ENCODE measurements at regions of chr9 and their contacts with region 1.

Region 1: DNA sequence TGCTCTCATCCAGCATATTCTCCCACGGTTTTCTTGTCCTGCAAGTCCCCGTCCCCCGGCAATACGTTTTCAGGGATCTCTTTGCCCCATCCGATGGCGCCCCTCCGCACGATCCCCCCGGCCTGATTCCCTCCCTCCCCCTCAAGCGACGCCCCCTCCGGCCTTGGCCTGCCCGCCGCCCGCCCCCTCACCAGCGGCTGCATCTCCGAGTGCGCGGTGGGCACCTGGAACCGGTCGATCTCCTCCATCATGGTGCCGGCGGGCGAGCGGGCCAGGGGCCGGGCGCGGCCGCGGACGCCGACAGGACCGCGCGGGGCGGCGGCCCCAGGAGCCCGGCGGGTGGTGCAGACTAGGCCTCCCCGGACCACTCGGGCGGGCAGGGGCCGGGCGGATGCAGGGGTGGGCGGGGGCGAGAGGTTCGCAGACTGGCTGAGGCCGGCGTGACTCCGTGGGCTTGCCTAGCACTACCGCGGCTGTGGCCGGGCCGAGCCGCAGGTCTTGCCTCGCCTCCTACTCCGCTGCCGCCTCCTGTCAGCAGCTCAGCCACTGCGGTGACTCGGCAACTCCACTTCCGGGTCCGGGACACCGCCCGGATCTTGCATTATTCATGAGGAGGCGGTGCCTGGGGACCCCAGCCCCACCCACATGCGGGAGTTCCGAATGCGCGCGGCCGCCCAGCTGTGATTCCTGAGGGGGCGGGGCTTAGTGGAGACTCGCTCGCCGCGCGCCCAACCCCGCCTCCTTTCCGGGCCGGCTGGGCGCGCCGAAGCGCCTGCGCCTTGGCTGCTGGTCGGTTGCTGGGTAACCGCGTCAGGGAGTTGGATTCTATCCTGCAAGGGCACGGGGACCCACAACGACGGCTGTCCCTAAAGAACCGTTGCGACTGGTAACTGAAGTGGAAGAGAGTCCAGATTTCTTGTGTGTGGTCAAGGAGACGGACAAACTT is at the starts of genes DNAI1 and FAM219A:
- DNase-seq: peak; percentile 99
- H3K4me3 Mint-ChIP-seq: peak within 1 kb of the TSS; percentile 86
- H3K27ac Mint-ChIP-seq: no peak within 1 kb of the TSS
- H3K4me1 Mint-ChIP-seq: peaks cover 40% of the 10 kb centered on the region
- H3K27me3 Mint-ChIP-seq: peaks cover 5% of the 10 kb centered on the region
- total RNA-seq, gene DNAI1: 0.19 to 0.69 TPM
- total RNA-seq, gene FAM219A: 13.3 to 13.8 TPM

Region 2: DNA sequence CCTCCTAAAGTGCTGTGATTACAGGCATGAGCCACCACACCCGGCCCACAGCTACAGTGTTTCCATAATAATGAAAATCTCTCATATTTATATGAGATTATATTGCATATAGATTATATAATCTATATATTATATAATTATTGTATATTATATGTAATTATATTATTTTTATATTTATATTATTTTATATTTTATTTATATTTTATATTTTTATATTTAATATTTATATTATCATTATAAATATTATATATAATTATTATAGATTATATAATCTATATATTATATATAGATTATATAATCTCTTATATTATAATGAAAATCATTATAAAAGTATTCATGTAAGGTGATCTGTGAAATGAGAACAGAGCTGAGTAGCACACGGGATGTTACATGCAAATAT is 922.7 kb before region 1 on chr9:
- CTCF ChIA-PET with region 1: no interaction called
- POLR2A ChIA-PET with region 1: no interaction called
- intact Hi-C with region 1: no loop called
- DNase-seq: no peak
- H3K4me3 Mint-ChIP-seq: no peak overlapping the region
- H3K27ac Mint-ChIP-seq: no peak overlapping the region
- H3K4me1 Mint-ChIP-seq: no peaks in the 10 kb centered on the region
- H3K27me3 Mint-ChIP-seq: peaks cover 4% of the 10 kb centered on the region

Region 3: GRCh38 chr9:34048923-34049697 is 409.2 kb before region 1 on chr9:
- CTCF ChIA-PET with region 1: no interaction called
- POLR2A ChIA-PET with region 1: interaction called, 5 read pairs
- intact Hi-C with region 1: loop called (anchors 5 kb)
- DNase-seq: peak; percentile 97
- H3K4me3 Mint-ChIP-seq: peak overlapping the region; percentile 89
- H3K27ac Mint-ChIP-seq: peak overlapping the region; percentile 99
- H3K4me1 Mint-ChIP-seq: peaks cover 32% of the 10 kb centered on the region
- H3K27me3 Mint-ChIP-seq: no peaks in the 10 kb centered on the region

Region 4: GRCh38 chr9:34446468-34446891 is 11.8 kb before region 1 on chr9:
- CTCF ChIA-PET with region 1: interaction called, 13 read pairs
- POLR2A ChIA-PET with region 1: interaction called, 4 read pairs
- intact Hi-C with region 1: no loop called
- DNase-seq: no peak
- H3K4me3 Mint-ChIP-seq: no peak overlapping the region
- H3K27ac Mint-ChIP-seq: no peak overlapping the region
- H3K4me1 Mint-ChIP-seq: peaks cover 6% of the 10 kb centered on the region
- H3K27me3 Mint-ChIP-seq: no peaks in the 10 kb centered on the region

Region 5: DNA sequence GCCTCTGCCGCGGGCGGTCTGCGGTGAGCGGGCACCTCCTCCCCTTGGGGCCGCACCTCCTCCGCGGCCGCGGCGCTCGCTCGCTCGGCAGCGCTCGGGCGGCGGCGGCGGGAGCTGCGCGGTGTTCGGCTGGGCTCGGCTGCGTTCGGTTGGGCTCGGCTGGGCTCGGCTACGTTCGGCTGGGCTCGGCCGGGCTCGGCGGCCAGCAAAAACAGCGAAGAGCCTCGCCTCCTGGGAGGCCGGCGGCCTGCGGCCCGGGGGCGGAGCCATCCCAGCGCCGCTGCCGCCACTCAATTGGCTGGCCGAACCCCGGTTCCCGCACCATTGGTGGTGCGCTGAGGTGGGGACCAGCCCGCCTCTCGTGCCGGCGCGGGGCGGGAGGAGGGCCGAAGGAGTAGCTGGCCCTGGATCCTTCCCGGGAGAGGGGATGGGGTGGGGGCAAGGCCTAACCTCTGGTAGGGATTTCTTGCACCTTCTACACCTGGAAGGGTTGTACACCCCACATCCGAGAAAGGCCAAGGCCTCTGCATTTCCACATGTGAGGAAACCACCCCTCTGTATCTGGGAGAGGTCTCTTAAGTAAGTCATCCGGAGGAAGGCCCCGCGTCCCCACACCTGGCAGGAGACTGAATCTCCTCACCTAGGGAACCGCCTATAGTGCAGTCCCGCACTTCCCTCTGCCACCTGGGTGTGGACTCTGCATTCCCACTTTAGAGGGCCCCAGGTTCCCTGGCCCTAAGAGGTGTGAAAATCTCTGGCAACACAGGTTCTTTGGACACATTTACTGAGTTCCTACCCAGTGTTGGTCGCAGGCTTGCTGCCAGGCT is 64.9 kb after region 1 on chr9 and contains the start of gene ENHO:
- CTCF ChIA-PET with region 1: no interaction called
- POLR2A ChIA-PET with region 1: no interaction called
- intact Hi-C with region 1: loop called (anchors 1 kb)
- DNase-seq: peak; percentile 94
- H3K4me3 Mint-ChIP-seq: peak within 1 kb of the TSS; percentile 48
- H3K27ac Mint-ChIP-seq: no peak within 1 kb of the TSS
- H3K4me1 Mint-ChIP-seq: peaks cover 16% of the 10 kb centered on the region
- H3K27me3 Mint-ChIP-seq: peaks cover 5% of the 10 kb centered on the region
- total RNA-seq, gene ENHO: 0.26 to 0.36 TPM

Region 6: DNA sequence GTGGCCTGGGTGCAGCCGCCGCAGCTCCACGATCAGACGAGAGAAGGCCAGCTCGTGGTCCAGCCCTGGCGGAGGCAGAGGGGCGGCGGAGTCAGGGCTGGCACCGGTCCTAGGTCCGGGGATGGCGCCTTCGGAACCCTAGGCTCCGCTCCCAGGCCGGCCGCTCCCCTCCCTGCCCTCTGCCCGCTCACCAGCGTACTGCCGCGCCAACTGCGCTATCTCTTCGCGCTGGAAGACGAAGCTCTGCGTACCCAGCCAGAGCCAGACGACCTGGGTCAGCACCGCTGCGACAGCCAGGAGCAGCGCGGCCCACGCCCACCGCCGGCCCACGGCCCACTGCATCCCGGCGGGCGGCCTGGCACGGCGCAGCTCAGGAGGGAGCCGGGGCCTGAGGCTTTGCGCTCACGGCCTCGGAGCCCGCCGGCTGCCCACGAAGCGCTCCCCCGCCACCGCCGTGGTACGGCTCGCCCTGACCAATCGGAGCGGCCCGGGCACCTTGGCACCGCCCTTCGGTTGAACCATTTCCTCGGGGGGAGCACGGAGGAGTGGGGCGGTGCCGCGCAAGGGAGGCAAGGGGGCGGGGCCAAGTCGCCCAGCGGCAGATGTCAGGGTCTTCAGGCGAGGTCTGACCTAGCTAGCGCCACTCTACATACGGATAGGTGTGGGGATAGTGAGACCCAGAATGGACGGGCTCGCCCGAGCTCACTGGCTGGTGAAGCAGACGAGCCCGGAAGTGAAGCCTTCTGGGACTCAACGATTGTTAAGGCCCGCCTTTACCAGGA is 179.3 kb after region 1 on chr9 and contains the start of gene SIGMAR1:
- CTCF ChIA-PET with region 1: interaction called, 5 read pairs
- POLR2A ChIA-PET with region 1: no interaction called
- intact Hi-C with region 1: loop called (anchors 2 kb)
- DNase-seq: peak; percentile 94
- H3K4me3 Mint-ChIP-seq: peak within 1 kb of the TSS; percentile 94
- H3K27ac Mint-ChIP-seq: peak within 1 kb of the TSS; percentile 80
- H3K4me1 Mint-ChIP-seq: peaks cover 41% of the 10 kb centered on the region
- H3K27me3 Mint-ChIP-seq: no peaks in the 10 kb centered on the region
- total RNA-seq, gene SIGMAR1: 65.9 to 67.6 TPM

Measured in activated CD4-positive, alpha-beta memory T cell treated with anti-CD3 and anti-CD28 coated beads for 36 hours (primary cell).